WTC11 (cell line): ENCODE measurements at regions of chr17 and their contacts with region 1.

Region 1: DNA sequence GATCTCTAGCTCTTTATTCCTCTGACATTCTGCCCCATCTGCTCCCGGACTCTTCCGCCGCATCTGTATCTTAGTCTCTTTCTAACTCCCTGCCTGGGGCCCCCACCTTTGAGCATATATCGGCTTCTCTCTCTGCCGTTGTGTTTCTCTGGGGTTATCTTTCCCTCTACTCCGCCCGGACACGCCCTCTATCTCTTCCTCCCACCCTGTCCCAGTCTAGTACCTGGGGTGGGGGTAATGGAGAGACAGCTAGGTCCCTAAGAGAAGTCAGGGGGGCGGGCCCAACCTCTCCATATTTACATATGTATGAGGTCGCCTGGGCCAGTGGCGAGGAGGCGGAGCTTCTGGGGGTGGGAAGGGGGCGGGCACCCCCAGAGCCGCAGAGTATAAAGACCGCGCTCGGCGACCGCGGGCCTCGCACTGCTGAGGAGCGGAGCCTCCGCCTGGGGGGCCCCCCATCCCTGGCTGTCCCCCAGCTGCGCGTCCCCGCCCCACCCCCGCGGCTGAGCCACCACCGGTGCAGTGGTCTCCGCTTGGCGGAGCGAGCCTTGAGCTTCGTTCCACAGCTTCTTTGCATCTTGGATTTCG is at the start of gene ATP1B2:
- DNase-seq: peak; percentile 96
- ATAC-seq: peak; percentile 97
- H3K4me3 Mint-ChIP-seq: peak within 1 kb of the TSS; percentile 83
- H3K27ac Mint-ChIP-seq: peak within 1 kb of the TSS; percentile 73
- H3K4me1 Mint-ChIP-seq: peaks cover 33% of the 10 kb centered on the region
- H3K27me3 Mint-ChIP-seq: peaks cover 53% of the 10 kb centered on the region
- CTCF ChIP-seq: no peak
- total RNA-seq, gene ATP1B2: 29.1 to 37.5 TPM (median 35.9 TPM) in 3 replicates

Region 2: DNA sequence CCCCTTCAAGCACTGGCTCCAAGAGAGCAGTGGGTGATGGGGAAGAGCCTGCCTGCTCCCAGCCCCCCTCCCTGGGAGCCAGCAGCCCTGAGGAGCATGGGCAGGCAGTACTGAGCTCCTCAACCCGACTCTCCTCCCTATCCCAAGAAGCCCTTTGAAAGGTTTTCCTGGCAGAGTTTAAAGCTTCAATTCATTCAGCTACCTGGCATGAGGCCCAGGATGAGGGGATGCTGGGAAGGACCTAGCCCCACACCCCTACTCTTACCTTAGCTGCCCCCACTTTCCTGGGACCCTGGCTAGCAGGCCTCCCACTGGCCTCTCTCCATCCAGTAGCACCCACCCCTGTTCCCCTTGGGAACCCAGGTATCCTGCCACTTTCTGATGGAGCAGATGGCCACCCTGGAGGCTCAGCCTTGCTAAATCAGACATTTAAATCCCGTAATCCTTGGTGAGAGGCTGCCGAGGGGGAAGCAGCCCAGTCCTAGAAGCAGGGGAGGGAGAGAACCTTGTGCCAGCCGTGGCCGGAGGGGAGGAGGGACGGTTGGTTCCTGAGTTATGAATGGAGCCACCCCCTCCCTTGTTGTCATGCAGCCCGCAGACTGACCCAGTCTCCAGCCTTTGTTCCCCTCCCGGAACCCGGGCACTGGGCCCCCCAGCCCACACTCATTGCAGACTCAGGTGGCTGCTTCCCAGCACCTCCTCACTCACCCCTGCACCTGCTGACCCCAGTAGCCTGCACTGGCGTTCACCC is 17.2 kb after region 1 on chr17:
- CTCF ChIA-PET with region 1: interaction called, 29 read pairs
- POLR2A ChIA-PET with region 1: interaction called, 11 read pairs
- DNase-seq: no peak
- ATAC-seq: peak; percentile 33
- H3K4me3 Mint-ChIP-seq: no peak overlapping the region
- H3K27ac Mint-ChIP-seq: peak overlapping the region; percentile 84
- H3K4me1 Mint-ChIP-seq: peaks cover 12% of the 10 kb centered on the region
- H3K27me3 Mint-ChIP-seq: no peaks in the 10 kb centered on the region
- CTCF ChIP-seq: no peak

Region 3: GRCh38 chr17:7673239-7673638 is 22.6 kb after region 1 on chr17:
- CTCF ChIA-PET with region 1: interaction called, 29 read pairs
- POLR2A ChIA-PET with region 1: interaction called, 8 read pairs
- DNase-seq: peak; percentile 78
- ATAC-seq: no peak
- H3K4me3 Mint-ChIP-seq: no peak overlapping the region
- H3K27ac Mint-ChIP-seq: no peak overlapping the region; the same call in 1 of the 2 replicates
- H3K4me1 Mint-ChIP-seq: peaks cover 31% of the 10 kb centered on the region
- H3K27me3 Mint-ChIP-seq: no peaks in the 10 kb centered on the region; the same call in 1 of the 2 replicates
- CTCF ChIP-seq: peak; percentile 58

Region 4: GRCh38 chr17:7745748-7746470 is 95.3 kb after region 1 on chr17:
- CTCF ChIA-PET with region 1: no interaction called
- POLR2A ChIA-PET with region 1: no interaction called
- DNase-seq: no peak
- ATAC-seq: no peak
- H3K4me3 Mint-ChIP-seq: no peak overlapping the region
- H3K27ac Mint-ChIP-seq: no peak overlapping the region
- H3K4me1 Mint-ChIP-seq: no peaks in the 10 kb centered on the region
- H3K27me3 Mint-ChIP-seq: peaks cover 6% of the 10 kb centered on the region
- CTCF ChIP-seq: no peak